ENCODE measurements at regions of chr18 and their contacts with region 1.

Region 1: GRCh38 chr18:58781627-58782194 is 83.0 kb upstream of the ZNF532 start:
- DNase-seq: peak; percentile 90
- H3K4me3 Mint-ChIP-seq: no peak overlapping the region
- H3K27ac Mint-ChIP-seq: no peak overlapping the region
- H3K4me1 Mint-ChIP-seq: peaks cover 3% of the 10 kb centered on the region
- H3K27me3 Mint-ChIP-seq: peaks cover 9% of the 10 kb centered on the region

Region 2: GRCh38 chr18:59056706-59057492 is 275.2 kb after region 1 on chr18:
- intact Hi-C with region 1: loop called (anchors 1 kb)
- DNase-seq: peak; percentile 86
- H3K4me3 Mint-ChIP-seq: no peak overlapping the region
- H3K27ac Mint-ChIP-seq: no peak overlapping the region
- H3K4me1 Mint-ChIP-seq: no peaks in the 10 kb centered on the region
- H3K27me3 Mint-ChIP-seq: peaks cover 6% of the 10 kb centered on the region

Region 3: DNA sequence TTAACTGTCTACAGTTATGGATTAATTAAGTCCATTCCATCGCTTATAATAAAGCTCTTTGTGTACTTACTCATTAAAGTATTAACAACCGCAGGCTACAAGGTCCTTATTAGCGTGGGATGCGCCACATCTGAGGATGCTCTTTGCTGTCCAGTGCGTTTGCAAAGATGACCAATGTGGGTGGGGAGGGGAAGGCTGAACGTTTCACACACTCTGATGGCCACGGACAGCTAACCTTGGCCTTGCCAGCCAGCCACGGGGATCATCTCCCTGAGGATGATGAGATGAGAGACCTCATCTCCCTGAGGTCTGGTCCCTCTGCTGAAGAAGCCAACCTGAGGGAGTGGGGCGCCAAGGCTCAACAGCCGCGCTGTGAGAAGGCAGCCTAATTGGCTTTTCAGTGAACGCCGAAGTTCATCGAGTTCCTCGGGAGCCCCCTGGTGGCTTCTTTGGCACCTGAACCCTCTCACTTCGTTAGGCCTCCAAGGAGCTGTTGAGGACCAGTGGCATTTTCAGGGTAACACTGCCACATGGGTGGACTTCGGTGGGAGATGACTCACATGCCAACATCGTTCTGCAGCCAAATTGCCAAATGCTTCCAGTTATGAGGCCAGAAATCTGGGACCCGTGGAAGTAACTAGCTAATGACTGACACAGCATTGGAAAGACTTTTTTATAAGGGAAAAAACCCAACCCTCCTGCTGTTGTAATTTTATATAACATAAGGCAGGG is 288.6 kb after region 1 on chr18:
- intact Hi-C with region 1: loop called (anchors 1 kb)
- DNase-seq: peak; percentile 91
- H3K4me3 Mint-ChIP-seq: no peak overlapping the region
- H3K27ac Mint-ChIP-seq: no peak overlapping the region
- H3K4me1 Mint-ChIP-seq: no peaks in the 10 kb centered on the region
- H3K27me3 Mint-ChIP-seq: peaks cover 7% of the 10 kb centered on the region